ENCODE measurements at regions of chr17 and their contacts with region 1.

Region 1: GRCh38 chr17:40317880-40318829 is 9.2 kb downstream of the RARA start:
- DNase-seq: peak; percentile 83 to 94 (median 89)
- ATAC-seq: peak; percentile 67 to 76 (median 70)
- H3K4me3 ChIP-seq: peak overlapping the region; percentile 75 to 99
- H3K4me3 Mint-ChIP-seq: peak overlapping the region; percentile 91 to 96 (median 94)
- H3K27ac ChIP-seq: peak overlapping the region; percentile 99
- H3K27ac Mint-ChIP-seq: peak overlapping the region; percentile 99 to 100
- H3K4me1 ChIP-seq: peaks cover 41 to 91% of the 10 kb centered on the region in 2 experiments
- H3K4me1 Mint-ChIP-seq: peaks cover 83 to 90% (median 83%) of the 10 kb centered on the region in 3 donors
- H3K27me3 ChIP-seq: no peaks in the 10 kb centered on the region
- H3K27me3 Mint-ChIP-seq: no peaks in the 10 kb centered on the region

Region 2: DNA sequence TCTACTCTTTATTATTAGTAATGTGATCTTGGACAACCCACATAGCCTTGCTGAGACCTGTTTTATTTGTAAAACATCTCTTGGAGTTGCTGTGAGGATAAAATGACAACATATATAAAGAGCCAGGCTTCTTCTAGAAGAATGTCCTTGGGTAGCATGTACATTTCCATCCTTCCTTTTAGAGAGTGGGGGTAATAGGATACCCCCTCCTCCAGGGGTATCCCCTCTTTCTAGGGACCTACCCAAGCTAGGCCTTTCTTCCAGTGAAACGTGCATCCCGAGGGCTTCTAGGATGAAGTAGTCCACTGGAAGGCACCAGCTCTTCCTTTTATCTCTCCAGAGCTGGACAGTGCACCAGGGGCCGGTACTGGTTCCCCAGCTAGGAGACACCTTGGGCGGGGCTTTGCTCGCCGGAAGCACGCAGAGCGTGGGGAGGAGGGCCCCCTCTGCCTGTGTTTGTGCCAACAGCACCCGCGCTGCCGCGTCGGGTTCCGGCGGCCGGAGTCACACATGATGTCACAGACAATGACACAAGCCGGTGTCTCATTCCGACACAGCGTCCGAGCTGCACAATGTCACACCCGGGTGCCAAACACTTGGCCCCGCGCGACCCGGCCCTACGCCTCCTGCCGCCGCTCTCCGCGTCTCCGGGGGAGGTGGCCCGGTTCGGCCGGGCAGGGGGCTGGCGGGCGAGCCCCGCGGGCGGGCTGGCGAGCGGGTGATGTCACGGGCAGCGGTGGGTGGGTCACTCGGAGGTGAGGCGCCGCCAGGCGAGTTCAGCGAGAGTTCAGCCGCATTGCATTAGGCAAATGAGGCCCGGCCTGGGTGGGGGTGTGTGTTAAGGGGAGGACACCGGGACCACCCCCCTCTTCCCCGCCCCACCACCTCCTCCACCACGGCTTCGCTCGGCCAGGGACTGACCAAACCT is 23.0 kb after region 1 on chr17:
- CTCF ChIA-PET with region 1: interaction called, 3 to 10 read pairs
- POLR2A ChIA-PET with region 1: interaction called, 3 to 15 read pairs
- DNase-seq: peak; percentile 61 to 94 (median 88)
- ATAC-seq: peak; percentile 79 to 82 (median 81)
- H3K4me3 ChIP-seq: peak overlapping the region; percentile 67 to 72
- H3K4me3 Mint-ChIP-seq: peak overlapping the region; percentile 74 to 82 (median 77)
- H3K27ac ChIP-seq: peak overlapping the region; percentile 84
- H3K27ac Mint-ChIP-seq: peak overlapping the region; percentile 86 to 92
- H3K4me1 ChIP-seq: peaks cover 65 to 89% of the 10 kb centered on the region in 2 experiments
- H3K4me1 Mint-ChIP-seq: peaks cover 74 to 80% (median 78%) of the 10 kb centered on the region in 3 donors
- H3K27me3 ChIP-seq: no peaks in the 10 kb centered on the region
- H3K27me3 Mint-ChIP-seq: no peaks in the 10 kb centered on the region

Region 3: DNA sequence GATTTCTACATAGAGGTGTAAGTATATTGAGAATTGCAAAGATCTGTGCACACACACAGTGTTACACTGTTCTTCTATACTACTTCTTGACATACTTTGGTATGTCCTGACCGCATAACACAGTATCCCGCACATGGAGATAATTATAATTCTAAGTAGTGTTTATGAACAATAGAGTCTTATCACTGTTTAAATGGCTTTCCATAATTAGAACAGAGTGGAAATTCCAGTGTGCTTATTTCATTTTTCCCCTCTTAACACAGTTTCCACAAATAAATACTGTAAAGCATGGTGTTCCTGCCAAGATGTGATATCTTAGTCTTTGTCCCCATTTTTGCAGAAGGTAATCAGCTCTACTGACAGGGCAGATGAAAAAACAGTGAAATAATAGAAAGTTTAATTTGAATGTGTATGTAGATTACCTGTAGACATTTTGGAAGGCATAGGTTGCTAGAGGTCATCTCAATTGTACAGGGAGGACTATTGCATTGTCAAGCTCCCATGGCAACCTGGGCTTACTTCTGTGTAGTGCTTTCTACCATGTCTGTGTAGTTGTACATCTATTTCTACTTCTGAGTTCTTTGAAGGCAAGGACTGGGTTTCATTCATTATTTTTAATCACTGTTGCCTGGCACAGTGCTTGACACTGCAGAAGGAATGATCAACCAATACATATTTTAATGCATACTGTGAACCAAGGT is 491.7 kb after region 1 on chr17:
- CTCF ChIA-PET with region 1: no interaction called
- POLR2A ChIA-PET with region 1: interaction called in 1 of 2 experiments, 10 read pairs
- DNase-seq: no peak
- ATAC-seq: no peak
- H3K4me3 ChIP-seq: no peak overlapping the region
- H3K4me3 Mint-ChIP-seq: no peak overlapping the region
- H3K27ac ChIP-seq: no peak overlapping the region
- H3K27ac Mint-ChIP-seq: no peak overlapping the region
- H3K4me1 ChIP-seq: no peaks in the 10 kb centered on the region
- H3K4me1 Mint-ChIP-seq: no peaks in the 10 kb centered on the region
- H3K27me3 ChIP-seq: peaks cover 4 to 17% of the 10 kb centered on the region in 2 experiments
- H3K27me3 Mint-ChIP-seq: peaks cover 71 to 86% of the 10 kb centered on the region in 2 donors

Measured in T-cell (primary cell).